Sigmoid colon (tissue), 7 donors: ENCODE measurements at regions of chr10 and their contacts with region 1.

Region 1: DNA sequence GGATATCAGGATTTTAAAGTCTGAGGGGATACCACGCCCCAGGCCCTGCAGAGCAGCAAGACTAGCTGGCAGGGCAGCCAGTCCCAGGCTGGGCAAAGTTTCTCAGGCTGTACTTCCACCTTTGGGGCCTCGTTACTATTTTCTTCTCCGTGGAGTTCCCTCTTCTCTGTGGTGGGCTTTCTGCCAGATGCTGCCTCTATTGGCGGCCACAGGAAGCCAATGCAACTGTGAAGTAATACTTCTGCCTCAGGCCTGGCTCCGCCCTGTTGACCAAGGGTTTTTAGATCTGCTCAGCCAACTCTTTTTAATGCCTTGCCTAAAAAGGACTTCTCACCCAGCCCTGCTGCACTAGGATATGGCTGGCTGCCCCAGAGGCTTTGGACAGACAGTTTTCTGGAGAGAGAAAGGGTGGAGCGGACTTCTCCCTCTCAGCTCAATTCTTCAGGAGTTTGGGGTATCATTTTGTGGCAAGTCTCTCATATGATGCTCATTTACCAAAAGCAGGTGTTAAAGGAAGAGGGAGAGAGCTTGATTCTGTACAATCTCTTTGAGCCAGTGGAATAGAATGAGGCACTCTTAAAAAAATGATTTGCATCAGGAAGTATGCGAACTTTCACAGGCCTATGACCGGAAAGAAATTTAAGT is 67.4 kb downstream of the HHEX start:
- DNase-seq: peak; percentile 97
- H3K4me3 ChIP-seq: peak overlapping the region in 2 of 4 donors; percentile 12 to 26
- H3K27ac ChIP-seq: peak overlapping the region; percentile 89 to 90 (median 90)
- H3K4me1 ChIP-seq: peaks cover 0 to 48% (median 42%) of the 10 kb centered on the region in 4 donors
- H3K27me3 ChIP-seq: no peaks in the 10 kb centered on the region
- CTCF ChIP-seq: peak in 1 of 4 experiments; percentile 21
- EP300 ChIP-seq: no peak
- POLR2A ChIP-seq: no peak

Region 2: GRCh38 chr10:92689663-92690210 is 67.5 kb before region 1 on chr10 and contains the start of gene HHEX:
- intact Hi-C with region 1: loop called (anchors 2 kb)
- DNase-seq: peak; percentile 77
- H3K4me3 ChIP-seq: peak within 1 kb of the TSS; percentile 73 to 81 (median 76)
- H3K27ac ChIP-seq: peak within 1 kb of the TSS; percentile 79 to 92 (median 86)
- H3K4me1 ChIP-seq: peaks cover 0 to 34% (median 15%) of the 10 kb centered on the region in 4 donors
- H3K27me3 ChIP-seq: peaks cover 0 to 27% (median 2%) of the 10 kb centered on the region in 3 donors
- CTCF ChIP-seq: no peak
- EP300 ChIP-seq: no peak
- POLR2A ChIP-seq: no peak
- total RNA-seq, gene HHEX: 3.5 to 8.9 (median 6.6) TPM

Region 3: GRCh38 chr10:92699518-92700381 is 57.4 kb before region 1 on chr10:
- intact Hi-C with region 1: loop called (anchors 2 kb)
- DNase-seq: no peak
- H3K4me3 ChIP-seq: peak overlapping the region; percentile 18 to 53 (median 44)
- H3K27ac ChIP-seq: peak overlapping the region; percentile 52 to 83 (median 68)
- H3K4me1 ChIP-seq: peaks cover 0 to 18% (median 6%) of the 10 kb centered on the region in 4 donors
- H3K27me3 ChIP-seq: peaks cover 0 to 14% (median 0%) of the 10 kb centered on the region in 3 donors
- CTCF ChIP-seq: no peak
- EP300 ChIP-seq: no peak
- POLR2A ChIP-seq: no peak

Region 4: GRCh38 chr10:92822060-92822634 is 65.0 kb after region 1 on chr10:
- intact Hi-C with region 1: loop called (anchors 5 kb)
- DNase-seq: no peak
- H3K4me3 ChIP-seq: no peak overlapping the region
- H3K27ac ChIP-seq: peak overlapping the region; percentile 23 to 68 (median 48)
- H3K4me1 ChIP-seq: peaks cover 0 to 14% (median 6%) of the 10 kb centered on the region in 4 donors
- H3K27me3 ChIP-seq: no peaks in the 10 kb centered on the region
- CTCF ChIP-seq: no peak
- EP300 ChIP-seq: no peak
- POLR2A ChIP-seq: no peak

Region 5: GRCh38 chr10:92848441-92849233 is 91.4 kb after region 1 on chr10 and contains the start of gene EXOC6:
- intact Hi-C with region 1: loop called (anchors 1 kb)
- DNase-seq: peak; percentile 88
- H3K4me3 ChIP-seq: peak within 1 kb of the TSS; percentile 89 to 99 (median 94)
- H3K27ac ChIP-seq: peak within 1 kb of the TSS; percentile 86 to 90 (median 88)
- H3K4me1 ChIP-seq: peaks cover 0 to 21% (median 12%) of the 10 kb centered on the region in 4 donors
- H3K27me3 ChIP-seq: no peaks in the 10 kb centered on the region
- CTCF ChIP-seq: peak in 1 of 4 experiments; percentile 19
- EP300 ChIP-seq: no peak
- POLR2A ChIP-seq: no peak
- total RNA-seq, gene EXOC6: 16.6 to 20.2 (median 18.9) TPM